Astrocyte of the cerebellum (primary cell): ENCODE measurements at regions of chr18 and their contacts with region 1.

Region 1: GRCh38 chr18:21522530-21522929 is 78.0 kb downstream of the ESCO1 start:
- DNase-seq: no peak
- H3K4me3 ChIP-seq: no peak overlapping the region
- CTCF ChIP-seq: no peak

Region 2: GRCh38 chr18:21489119-21489750 is 33.3 kb before region 1 on chr18:
- in situ Hi-C with region 1: loop called (anchors 5 kb)
- DNase-seq: peak; percentile 26
- H3K4me3 ChIP-seq: no peak overlapping the region
- CTCF ChIP-seq: peak; percentile 76